ENCODE measurements at regions of chr7 and their contacts with region 1.

Region 1: GRCh38 chr7:96075510-96076349 is 246.2 kb downstream of the SLC25A13 start:
- DNase-seq: peak; percentile 56
- H3K4me3 ChIP-seq: peak overlapping the region; percentile 46 to 80 (median 80)
- H3K27ac ChIP-seq: no peak overlapping the region
- H3K4me1 ChIP-seq: peaks cover 8% of the 10 kb centered on the region
- H3K27me3 ChIP-seq: peaks cover 0 to 3% of the 10 kb centered on the region in 2 experiments
- CTCF ChIP-seq: peak; percentile 88 to 90
- POLR2A ChIP-seq: no peak

Region 2: DNA sequence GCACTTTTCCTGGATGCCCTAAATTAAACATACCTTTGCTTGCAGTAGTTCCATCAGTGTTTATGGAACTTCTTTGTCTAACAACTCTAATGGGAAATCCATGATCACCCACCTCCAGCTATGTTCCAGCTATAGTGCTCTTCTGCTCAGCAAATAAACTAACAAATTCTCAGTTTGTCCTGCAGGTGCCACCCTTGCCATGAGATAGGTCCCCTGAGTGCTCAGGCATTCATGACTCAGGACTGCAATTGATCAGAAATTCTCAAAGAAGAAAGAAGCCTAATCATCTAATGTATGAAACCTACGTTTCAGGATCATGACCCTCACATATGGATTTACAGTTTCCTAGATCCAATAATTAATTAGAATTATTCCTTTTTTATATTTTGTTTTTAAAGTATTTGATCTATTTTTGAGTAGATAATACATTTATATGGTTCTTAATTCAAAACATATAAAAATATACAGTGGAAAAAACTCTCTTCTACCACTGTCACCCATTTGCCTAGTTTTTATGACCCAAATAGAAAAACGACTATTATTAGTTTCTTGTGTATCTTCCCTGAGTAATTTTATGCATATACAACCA is 352.0 kb before region 1 on chr7:
- CTCF ChIA-PET with region 1: no interaction called
- POLR2A ChIA-PET with region 1: no interaction called
- dilution Hi-C with region 1: no loop called
- intact Hi-C with region 1: loop called (anchors 1 kb)
- DNase-seq: peak; percentile 76
- H3K4me3 ChIP-seq: no peak overlapping the region
- H3K27ac ChIP-seq: no peak overlapping the region
- H3K4me1 ChIP-seq: no peaks in the 10 kb centered on the region
- H3K27me3 ChIP-seq: peaks cover 7 to 13% of the 10 kb centered on the region in 2 experiments
- CTCF ChIP-seq: peak; percentile 31 to 32
- POLR2A ChIP-seq: no peak

Region 3: GRCh38 chr7:95927756-95928155 is 148.0 kb before region 1 on chr7:
- CTCF ChIA-PET with region 1: no interaction called
- POLR2A ChIA-PET with region 1: no interaction called
- dilution Hi-C with region 1: no loop called
- intact Hi-C with region 1: no loop called
- DNase-seq: no peak
- H3K4me3 ChIP-seq: no peak overlapping the region
- H3K27ac ChIP-seq: no peak overlapping the region
- H3K4me1 ChIP-seq: peaks cover 8% of the 10 kb centered on the region
- H3K27me3 ChIP-seq: peaks cover 45 to 77% of the 10 kb centered on the region in 2 experiments
- CTCF ChIP-seq: no peak
- POLR2A ChIP-seq: no peak

Region 4: DNA sequence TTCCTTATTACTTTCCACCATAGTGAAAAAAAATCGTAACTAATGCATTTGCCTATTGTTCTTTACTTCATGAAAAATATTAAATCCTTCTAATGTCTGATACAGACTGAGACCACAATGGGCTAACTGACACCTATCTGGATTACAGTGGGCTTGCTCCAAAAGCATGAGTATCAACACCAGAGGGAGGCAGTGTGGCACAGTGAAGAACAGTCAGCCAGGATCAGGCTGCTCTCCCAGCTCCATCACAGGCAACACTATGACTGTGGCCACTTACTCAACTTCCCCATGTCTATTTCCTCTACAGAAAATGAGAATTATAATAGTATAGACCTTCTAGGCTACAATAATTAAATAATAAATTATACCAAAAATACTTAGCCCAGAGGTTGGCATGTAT is 149.0 kb after region 1 on chr7:
- CTCF ChIA-PET with region 1: no interaction called
- POLR2A ChIA-PET with region 1: no interaction called
- dilution Hi-C with region 1: no loop called
- intact Hi-C with region 1: loop called (anchors 2 kb)
- DNase-seq: peak; percentile 31
- H3K4me3 ChIP-seq: no peak overlapping the region
- H3K27ac ChIP-seq: no peak overlapping the region
- H3K4me1 ChIP-seq: no peaks in the 10 kb centered on the region
- H3K27me3 ChIP-seq: no peaks in the 10 kb centered on the region
- CTCF ChIP-seq: peak in 1 of 2 donors; percentile 36
- POLR2A ChIP-seq: no peak

Region 5: DNA sequence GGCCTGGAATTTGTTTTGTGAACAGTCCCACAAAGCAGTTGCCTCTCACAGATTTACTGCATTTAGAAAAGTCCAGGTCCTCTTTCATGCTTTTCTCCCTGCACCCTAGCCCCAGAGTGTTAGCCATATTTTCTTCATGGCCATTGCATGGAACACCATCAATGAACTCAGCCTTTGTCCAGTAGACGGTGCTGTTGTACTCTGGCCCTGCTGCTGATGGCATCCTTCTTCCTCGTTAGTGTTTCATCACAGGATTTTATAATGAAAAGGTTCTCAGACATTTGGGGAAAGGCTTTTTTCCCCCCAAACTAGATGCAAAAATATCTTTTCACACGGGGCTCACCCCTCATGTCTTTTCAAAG is 339.2 kb after region 1 on chr7:
- CTCF ChIA-PET with region 1: no interaction called
- POLR2A ChIA-PET with region 1: no interaction called
- dilution Hi-C with region 1: no loop called
- intact Hi-C with region 1: loop called (anchors 1 kb)
- DNase-seq: peak; percentile 10
- H3K4me3 ChIP-seq: no peak overlapping the region
- H3K27ac ChIP-seq: no peak overlapping the region
- H3K4me1 ChIP-seq: peaks cover 6% of the 10 kb centered on the region
- H3K27me3 ChIP-seq: no peaks in the 10 kb centered on the region
- CTCF ChIP-seq: peak; percentile 40 to 41
- POLR2A ChIP-seq: no peak

Region 6: DNA sequence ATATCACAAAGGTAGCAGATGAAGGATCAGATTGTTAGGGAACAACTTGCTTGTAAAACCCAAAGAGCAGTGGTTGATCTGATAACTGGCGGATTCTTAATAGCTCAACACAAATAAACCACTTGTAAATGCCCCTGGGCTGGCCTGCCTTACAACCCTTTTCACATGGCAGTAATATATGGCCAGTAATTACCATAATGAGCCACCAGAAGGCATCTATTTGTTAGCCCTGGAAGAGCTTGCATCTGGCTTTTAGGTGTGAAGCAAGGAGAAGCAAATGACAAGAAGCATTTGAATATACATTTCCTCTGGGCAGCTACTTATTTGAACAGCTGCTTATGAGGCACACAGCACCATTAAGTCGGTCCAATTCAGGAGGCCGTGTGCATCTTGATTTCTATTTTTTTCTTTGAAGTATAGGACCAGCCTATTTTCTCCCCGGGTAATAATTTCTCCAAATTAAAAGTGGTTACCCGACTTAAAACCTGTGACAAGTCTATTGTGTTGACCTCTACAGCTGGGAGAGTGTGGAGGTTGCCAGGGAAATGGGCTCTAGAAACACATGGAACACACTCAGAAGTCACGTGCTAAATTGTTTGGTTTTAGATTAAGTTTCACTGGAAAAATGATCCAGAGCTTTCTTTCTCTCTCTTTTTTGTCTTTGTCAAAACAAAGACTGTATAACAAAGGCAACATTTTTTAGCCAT is 520.5 kb after region 1 on chr7:
- CTCF ChIA-PET with region 1: interaction called, 5 read pairs
- POLR2A ChIA-PET with region 1: no interaction called
- dilution Hi-C with region 1: no loop called
- intact Hi-C with region 1: loop called (anchors 2 kb)
- DNase-seq: peak; percentile 21
- H3K4me3 ChIP-seq: no peak overlapping the region
- H3K27ac ChIP-seq: no peak overlapping the region
- H3K4me1 ChIP-seq: no peaks in the 10 kb centered on the region
- H3K27me3 ChIP-seq: peaks cover 2 to 7% of the 10 kb centered on the region in 2 experiments
- CTCF ChIP-seq: peak in 1 of 2 donors; percentile 10
- POLR2A ChIP-seq: no peak

Region 7: GRCh38 chr7:97064967-97065587 is 989.3 kb after region 1 on chr7:
- CTCF ChIA-PET with region 1: no interaction called
- POLR2A ChIA-PET with region 1: no interaction called
- dilution Hi-C with region 1: no loop called
- intact Hi-C with region 1: loop called (anchors 2 kb)
- DNase-seq: peak; percentile 54
- H3K4me3 ChIP-seq: no peak overlapping the region
- H3K27ac ChIP-seq: no peak overlapping the region
- H3K4me1 ChIP-seq: no peaks in the 10 kb centered on the region
- H3K27me3 ChIP-seq: peaks cover 0 to 2% of the 10 kb centered on the region in 2 experiments
- CTCF ChIP-seq: peak; percentile 53 to 68
- POLR2A ChIP-seq: no peak